WTC11 (cell line): ENCODE measurements at regions of chr11 and their contacts with region 1.

Region 1: GRCh38 chr11:72091005-72091691 is 10.5 kb downstream of the LRRC51 start:
- DNase-seq: peak; percentile 85
- ATAC-seq: peak; percentile 98
- H3K4me3 Mint-ChIP-seq: no peak overlapping the region
- H3K27ac Mint-ChIP-seq: peak overlapping the region; percentile 75; the same call in 1 of the 2 replicates
- H3K4me1 Mint-ChIP-seq: peaks cover 13% of the 10 kb centered on the region
- H3K27me3 Mint-ChIP-seq: no peaks in the 10 kb centered on the region
- CTCF ChIP-seq: peak; percentile 49; the same call in 1 of the 2 replicates

Region 2: DNA sequence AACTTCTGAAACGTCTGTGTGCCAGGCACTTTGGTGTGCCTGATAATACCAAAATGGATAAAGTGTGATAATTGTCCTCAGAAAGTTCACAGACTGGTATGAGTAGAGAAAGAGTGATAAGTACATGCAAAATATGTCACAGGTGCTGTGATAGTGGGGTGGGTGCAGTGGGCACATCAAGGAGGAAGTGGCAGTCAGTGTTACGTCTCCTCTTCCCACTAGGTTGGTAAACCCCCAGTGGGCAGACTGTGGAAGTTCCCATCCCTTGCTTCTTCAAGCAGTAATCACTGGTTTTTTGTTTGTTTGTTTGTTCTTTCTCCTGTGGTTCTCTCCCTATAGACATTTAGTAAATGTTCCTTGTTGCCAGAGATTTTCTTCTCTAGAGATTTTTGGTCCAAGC is 156.9 kb before region 1 on chr11:
- CTCF ChIA-PET with region 1: no interaction called
- POLR2A ChIA-PET with region 1: no interaction called
- DNase-seq: no peak
- ATAC-seq: no peak
- H3K4me3 Mint-ChIP-seq: no peak overlapping the region
- H3K27ac Mint-ChIP-seq: no peak overlapping the region
- H3K4me1 Mint-ChIP-seq: peaks cover 18% of the 10 kb centered on the region
- H3K27me3 Mint-ChIP-seq: no peaks in the 10 kb centered on the region
- CTCF ChIP-seq: no peak

Region 3: DNA sequence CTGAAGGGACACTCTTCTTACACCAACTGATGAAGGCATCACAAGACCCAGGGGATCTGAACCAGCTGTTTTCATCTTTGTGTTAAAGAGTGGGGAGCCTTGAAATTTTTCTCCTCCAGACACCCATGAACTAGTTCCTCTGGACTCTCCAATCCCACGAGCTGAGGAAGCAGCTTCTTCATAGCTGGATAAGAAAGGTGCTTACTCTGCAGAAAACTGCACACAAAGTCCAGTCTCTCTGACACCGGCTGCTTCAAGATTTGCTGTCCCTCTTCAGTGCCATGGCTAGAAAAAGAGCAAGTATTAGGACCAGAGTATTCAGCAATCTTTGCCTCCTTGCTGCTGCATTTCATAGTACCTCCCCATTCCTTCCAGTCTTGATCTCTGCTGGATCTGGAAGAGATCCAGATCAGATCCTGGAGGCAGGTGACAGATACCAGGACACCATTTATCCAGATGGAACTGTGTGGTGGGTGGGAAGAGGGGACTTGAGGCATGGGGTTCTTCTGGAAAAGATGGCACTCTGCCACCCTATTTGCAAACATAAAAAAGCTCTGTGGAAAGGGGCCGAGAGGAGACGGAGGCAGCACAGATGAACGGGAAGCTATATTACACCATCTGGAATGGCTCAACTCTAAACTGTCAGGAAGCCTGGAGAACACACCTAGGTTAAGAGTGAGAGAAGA is 66.9 kb before region 1 on chr11:
- CTCF ChIA-PET with region 1: interaction called, 235 read pairs
- POLR2A ChIA-PET with region 1: interaction called, 12 read pairs
- DNase-seq: no peak
- ATAC-seq: no peak
- H3K4me3 Mint-ChIP-seq: no peak overlapping the region
- H3K27ac Mint-ChIP-seq: no peak overlapping the region
- H3K4me1 Mint-ChIP-seq: peaks cover 3% of the 10 kb centered on the region; the same call in 1 of the 2 replicates
- H3K27me3 Mint-ChIP-seq: no peaks in the 10 kb centered on the region
- CTCF ChIP-seq: no peak

Region 4: GRCh38 chr11:72040726-72041441 is 50.3 kb before region 1 on chr11:
- CTCF ChIA-PET with region 1: interaction called, 30 read pairs
- POLR2A ChIA-PET with region 1: interaction called, 4 read pairs
- DNase-seq: peak; percentile 71
- ATAC-seq: peak; percentile 60
- H3K4me3 Mint-ChIP-seq: no peak overlapping the region
- H3K27ac Mint-ChIP-seq: no peak overlapping the region
- H3K4me1 Mint-ChIP-seq: peaks cover 33% of the 10 kb centered on the region
- H3K27me3 Mint-ChIP-seq: no peaks in the 10 kb centered on the region; the same call in 1 of the 2 replicates
- CTCF ChIP-seq: no peak

Region 5: GRCh38 chr11:72058416-72059034 is 32.6 kb before region 1 on chr11:
- CTCF ChIA-PET with region 1: interaction called, 10 read pairs
- POLR2A ChIA-PET with region 1: interaction called, 4 read pairs
- DNase-seq: no peak
- ATAC-seq: no peak
- H3K4me3 Mint-ChIP-seq: no peak overlapping the region
- H3K27ac Mint-ChIP-seq: peak overlapping the region; percentile 60; the same call in 1 of the 2 replicates
- H3K4me1 Mint-ChIP-seq: peaks cover 14% of the 10 kb centered on the region
- H3K27me3 Mint-ChIP-seq: no peaks in the 10 kb centered on the region
- CTCF ChIP-seq: no peak

Region 6: DNA sequence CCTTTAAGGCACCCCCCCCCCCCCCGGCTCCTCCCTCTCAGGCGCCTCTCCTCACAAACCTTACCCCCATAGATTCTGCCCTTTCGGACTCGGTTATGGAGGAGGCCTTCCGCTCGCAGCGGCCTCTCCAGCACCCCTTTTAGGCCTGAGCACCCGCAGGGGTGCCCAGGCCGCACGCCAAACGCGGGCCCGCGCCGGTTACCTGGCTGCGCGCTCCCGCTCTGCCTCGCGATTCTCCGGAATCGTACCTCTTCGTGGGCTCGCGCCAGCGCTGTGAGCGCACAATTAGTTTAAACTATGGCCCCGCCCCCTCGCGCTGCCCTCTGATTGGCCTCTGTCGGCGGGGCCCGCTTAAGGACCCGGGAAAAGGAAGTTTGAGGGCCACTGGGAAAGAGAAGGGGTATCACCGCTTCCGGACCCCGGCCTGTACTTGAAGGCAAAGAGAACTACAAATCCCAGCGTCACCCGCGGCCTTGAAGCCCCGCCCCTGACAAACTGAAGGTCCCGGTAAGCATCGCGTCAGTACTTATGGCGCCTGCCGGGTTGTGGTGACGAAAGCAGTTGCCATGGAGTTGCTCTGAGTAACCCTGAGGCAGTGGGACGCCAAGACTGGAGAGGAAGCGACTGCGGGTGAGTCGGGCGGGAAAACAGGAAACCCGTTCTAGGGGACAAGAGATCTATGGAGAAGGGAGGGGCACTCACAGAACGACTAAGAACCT is 10.7 kb before region 1 on chr11 and contains the starts of genes LRRC51 and NUMA1:
- CTCF ChIA-PET with region 1: interaction called, 26 read pairs
- POLR2A ChIA-PET with region 1: no interaction called
- DNase-seq: peak; percentile 100
- ATAC-seq: peak; percentile 94
- H3K4me3 Mint-ChIP-seq: peak within 1 kb of the TSS; percentile 84
- H3K27ac Mint-ChIP-seq: peak within 1 kb of the TSS; percentile 100
- H3K4me1 Mint-ChIP-seq: peaks cover 18% of the 10 kb centered on the region
- H3K27me3 Mint-ChIP-seq: no peaks in the 10 kb centered on the region
- CTCF ChIP-seq: no peak
- total RNA-seq, gene LRRC51: 5.3 to 5.6 TPM (median 5.3 TPM) in 3 replicates
- total RNA-seq, gene NUMA1: 117 to 147 TPM (median 118 TPM) in 3 replicates

Region 7: DNA sequence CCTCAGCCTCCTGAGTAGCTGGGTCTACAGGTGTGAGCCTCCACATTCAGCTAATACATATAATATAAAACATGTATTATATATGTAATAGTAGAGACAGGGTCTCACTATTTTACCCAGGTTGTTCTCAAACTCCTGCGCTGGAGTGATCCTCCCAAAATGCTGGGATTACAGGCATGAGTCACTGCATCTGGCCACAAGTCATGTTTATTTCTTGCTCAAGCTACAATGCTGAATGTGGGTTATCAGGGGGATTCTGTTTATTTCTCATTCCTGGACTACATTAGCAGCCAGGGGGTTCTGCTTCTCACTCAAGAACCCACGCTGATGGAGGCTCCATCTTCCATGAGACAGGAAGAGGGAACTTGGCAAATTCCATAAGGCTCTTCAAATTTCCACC is 69.2 kb after region 1 on chr11:
- CTCF ChIA-PET with region 1: no interaction called
- POLR2A ChIA-PET with region 1: no interaction called
- DNase-seq: no peak
- ATAC-seq: no peak
- H3K4me3 Mint-ChIP-seq: no peak overlapping the region
- H3K27ac Mint-ChIP-seq: no peak overlapping the region
- H3K4me1 Mint-ChIP-seq: no peaks in the 10 kb centered on the region
- H3K27me3 Mint-ChIP-seq: peaks cover 23% of the 10 kb centered on the region
- CTCF ChIP-seq: no peak

Region 8: GRCh38 chr11:72222907-72223614 is 131.9 kb after region 1 on chr11:
- CTCF ChIA-PET with region 1: interaction called, 10 read pairs
- POLR2A ChIA-PET with region 1: no interaction called
- DNase-seq: peak; percentile 96
- ATAC-seq: peak; percentile 72
- H3K4me3 Mint-ChIP-seq: peak overlapping the region; percentile 73
- H3K27ac Mint-ChIP-seq: peak overlapping the region; percentile 80
- H3K4me1 Mint-ChIP-seq: peaks cover 29% of the 10 kb centered on the region
- H3K27me3 Mint-ChIP-seq: peaks cover 7% of the 10 kb centered on the region; the same call in 1 of the 2 replicates
- CTCF ChIP-seq: no peak

Region 9: GRCh38 chr11:72321381-72321996 is 230.3 kb after region 1 on chr11:
- CTCF ChIA-PET with region 1: no interaction called
- POLR2A ChIA-PET with region 1: no interaction called
- DNase-seq: no peak
- ATAC-seq: no peak
- H3K4me3 Mint-ChIP-seq: no peak overlapping the region
- H3K27ac Mint-ChIP-seq: no peak overlapping the region
- H3K4me1 Mint-ChIP-seq: no peaks in the 10 kb centered on the region
- H3K27me3 Mint-ChIP-seq: no peaks in the 10 kb centered on the region
- CTCF ChIP-seq: no peak